Breast epithelium (tissue), 4 donors: ENCODE measurements at regions of chr3 and their contacts with region 1.

Region 1: DNA sequence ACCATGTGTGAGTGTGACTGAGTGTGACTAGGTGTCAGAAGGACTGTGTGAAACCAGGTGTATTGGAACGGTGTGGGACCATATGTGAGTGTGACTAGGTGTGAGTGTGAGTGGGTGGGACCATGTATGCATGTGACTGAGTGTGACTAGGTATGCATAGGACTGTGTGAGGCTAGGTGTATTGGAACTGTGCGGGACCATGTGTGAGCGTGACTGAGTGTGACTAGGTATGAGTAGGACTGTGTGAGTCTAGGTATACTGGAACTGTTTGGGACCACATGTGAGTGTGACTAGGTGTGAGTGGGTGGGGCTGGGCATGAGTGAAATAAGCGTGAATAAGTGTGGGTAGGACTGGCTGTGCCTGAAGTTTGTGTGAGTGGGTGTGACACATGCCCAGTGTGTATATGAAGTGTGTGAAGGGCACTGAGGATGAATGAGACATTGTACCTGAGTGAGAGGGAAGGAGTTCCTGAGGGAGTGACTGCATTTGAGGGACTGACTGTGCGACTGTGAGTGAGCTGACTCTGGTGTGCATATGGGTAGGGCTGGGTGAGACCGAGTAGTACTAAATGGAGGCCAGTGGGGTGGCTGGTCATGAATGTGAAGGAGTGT is 247.0 kb upstream of the CCDC54 start:
- DNase-seq: no peak
- H3K4me3 ChIP-seq: no peak overlapping the region
- H3K27ac ChIP-seq: no peak overlapping the region
- H3K4me1 ChIP-seq: no peaks in the 10 kb centered on the region
- H3K27me3 ChIP-seq: no peaks in the 10 kb centered on the region
- CTCF ChIP-seq: no peak
- POLR2A ChIP-seq: no peak

Region 2: DNA sequence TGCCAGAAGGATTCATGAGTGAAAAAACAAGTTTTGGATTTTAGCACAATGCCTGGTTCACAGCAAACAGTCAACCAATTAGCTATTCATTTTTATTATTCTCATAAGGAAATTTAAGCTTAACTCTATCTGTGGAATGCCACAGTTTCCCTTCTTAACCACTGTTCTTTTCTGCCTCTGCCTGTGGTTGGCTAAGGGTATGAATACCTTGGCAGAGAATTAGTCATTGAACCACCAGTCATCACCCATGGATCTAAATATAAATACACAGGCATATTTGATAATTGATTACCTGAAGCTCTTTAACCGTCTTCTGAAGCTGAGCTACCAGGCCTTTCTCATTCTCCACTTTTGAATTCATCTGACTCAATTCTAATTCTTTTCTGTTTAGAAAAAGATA is 1300.3 kb after region 1 on chr3:
- intact Hi-C with region 1: loop called (anchors 5 kb)
- DNase-seq: no peak
- H3K4me3 ChIP-seq: no peak overlapping the region
- H3K27ac ChIP-seq: no peak overlapping the region
- H3K4me1 ChIP-seq: no peaks in the 10 kb centered on the region
- H3K27me3 ChIP-seq: no peaks in the 10 kb centered on the region
- CTCF ChIP-seq: no peak
- POLR2A ChIP-seq: no peak